GM12878 (cell line): ENCODE measurements at regions of chr2 and their contacts with region 1.

Region 1: DNA sequence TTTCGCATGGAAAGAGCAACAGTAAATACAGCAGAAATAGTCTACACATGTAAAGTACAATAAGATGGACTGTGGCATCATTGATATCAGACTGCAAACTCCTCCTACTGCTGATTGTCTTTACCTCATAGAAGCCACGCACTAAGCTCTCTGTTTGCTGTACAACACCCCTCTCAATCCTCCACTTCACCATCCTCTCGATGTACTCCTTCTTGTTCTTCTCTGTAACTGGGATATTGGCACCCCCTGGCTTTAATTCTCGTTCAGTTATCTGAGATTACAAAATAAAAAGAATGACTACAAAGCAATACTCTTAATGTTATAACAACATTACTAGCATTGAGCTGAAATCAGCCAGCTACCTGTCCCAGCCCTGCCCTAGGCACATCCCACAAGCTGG is 49.3 kb upstream of the STK17B start:
- DNase-seq: no peak
- ATAC-seq: no peak
- H3K4me3 ChIP-seq: no peak overlapping the region
- H3K27ac ChIP-seq: no peak overlapping the region
- H3K4me1 ChIP-seq: no peaks in the 10 kb centered on the region
- H3K27me3 ChIP-seq: no peaks in the 10 kb centered on the region
- CTCF ChIP-seq: no peak; a peak in 1 of 6 replicates
- EP300 ChIP-seq: no peak
- POLR2A ChIP-seq: no peak
- RAD21 ChIP-seq: no peak

Region 2: DNA sequence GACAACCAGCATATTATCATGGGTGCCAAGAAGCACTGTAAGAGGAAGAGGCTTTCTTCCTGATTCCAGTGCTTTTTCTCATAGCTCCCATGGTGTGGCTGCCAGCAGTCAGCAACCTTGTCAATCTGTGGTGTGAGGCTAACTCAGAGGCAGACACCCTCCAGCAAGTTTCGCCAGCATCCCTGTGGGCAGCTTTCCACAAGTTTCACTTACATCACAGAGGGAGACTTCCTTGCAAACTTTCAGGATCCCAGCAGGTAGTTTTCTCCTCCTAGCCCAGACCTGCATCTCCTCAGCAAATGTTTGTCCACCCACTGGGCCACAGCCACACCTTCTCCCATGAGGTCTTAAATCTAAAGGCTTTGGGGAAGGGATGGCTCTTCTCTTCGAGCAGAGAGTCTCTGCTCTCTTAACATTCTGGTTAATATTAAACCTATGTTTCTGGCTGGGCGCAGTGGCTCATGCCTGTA is 161.1 kb before region 1 on chr2:
- CTCF ChIA-PET with region 1: no interaction called
- POLR2A ChIA-PET with region 1: no interaction called
- RAD21 ChIA-PET with region 1: no interaction called
- SMC1A ChIA-PET with region 1: no interaction called
- in situ Hi-C with region 1: no loop called
- intact Hi-C with region 1: no loop called
- DNase-seq: no peak
- ATAC-seq: no peak
- H3K4me3 ChIP-seq: no peak overlapping the region
- H3K27ac ChIP-seq: no peak overlapping the region
- H3K4me1 ChIP-seq: no peaks in the 10 kb centered on the region
- H3K27me3 ChIP-seq: no peaks in the 10 kb centered on the region
- CTCF ChIP-seq: no peak
- EP300 ChIP-seq: no peak
- POLR2A ChIP-seq: no peak
- RAD21 ChIP-seq: no peak

Region 3: DNA sequence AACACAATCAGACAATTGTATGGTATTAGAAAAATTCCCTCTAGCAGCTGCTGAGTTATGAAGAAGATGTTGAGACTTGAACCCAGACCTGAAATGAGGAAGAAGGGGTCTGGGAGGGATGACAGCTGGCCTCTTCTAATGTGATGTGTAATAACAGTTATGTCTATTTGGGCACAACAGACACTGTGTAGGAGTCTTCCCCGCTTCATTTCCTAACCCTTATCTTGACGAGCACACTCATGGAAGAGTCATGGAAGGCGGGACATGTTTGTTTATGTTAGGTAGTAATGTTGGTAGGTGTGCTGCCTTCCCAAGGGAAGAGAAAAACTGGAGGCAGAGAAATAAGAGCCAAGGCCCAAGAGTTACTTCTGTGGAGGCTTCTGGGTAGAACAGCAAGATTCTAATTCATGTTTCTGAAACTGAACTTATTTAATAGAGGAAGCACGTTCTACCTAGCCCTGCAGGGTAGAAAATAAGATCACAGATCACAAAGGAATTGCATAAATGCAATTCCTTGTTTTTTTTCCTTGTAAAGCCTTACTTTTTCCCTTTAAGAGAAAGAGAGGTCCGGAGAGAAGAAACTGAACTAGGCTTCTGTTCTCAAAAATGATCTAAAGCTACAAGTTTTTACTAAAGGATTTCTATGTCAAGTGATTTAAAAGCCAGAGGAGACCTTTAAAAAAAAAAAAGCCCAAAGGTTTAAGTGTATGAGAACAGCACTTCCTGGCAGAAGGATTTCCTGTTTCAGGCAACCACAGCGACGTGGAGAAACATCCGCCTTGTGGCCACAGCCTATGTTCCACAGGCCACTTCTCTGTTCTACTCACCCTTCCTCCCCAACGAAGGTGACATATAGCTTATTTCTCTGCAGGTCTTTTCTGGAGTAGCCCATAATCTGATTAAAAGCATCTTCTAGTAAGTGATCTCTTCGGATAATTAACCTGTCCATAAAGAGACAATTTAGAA is 19.2 kb after region 1 on chr2:
- CTCF ChIA-PET with region 1: no interaction called
- POLR2A ChIA-PET with region 1: interaction called, 4 read pairs
- RAD21 ChIA-PET with region 1: interaction called, 6 read pairs
- SMC1A ChIA-PET with region 1: interaction called, 95 read pairs
- in situ Hi-C with region 1: no loop called
- intact Hi-C with region 1: no loop called
- DNase-seq: peak; percentile 86
- ATAC-seq: peak; percentile 79
- H3K4me3 ChIP-seq: no peak overlapping the region
- H3K27ac ChIP-seq: peak overlapping the region; percentile 75
- H3K4me1 ChIP-seq: peaks cover 36% of the 10 kb centered on the region
- H3K27me3 ChIP-seq: no peaks in the 10 kb centered on the region
- CTCF ChIP-seq: 0 out of 6 replicates have a peak, but pooled peaks of 1 of the 3 experiments have one; percentile 3
- EP300 ChIP-seq: peak; percentile 74 to 85
- POLR2A ChIP-seq: no peak
- RAD21 ChIP-seq: 0 out of 2 replicates have a peak, but pooled peaks have one; percentile 19

Region 4: DNA sequence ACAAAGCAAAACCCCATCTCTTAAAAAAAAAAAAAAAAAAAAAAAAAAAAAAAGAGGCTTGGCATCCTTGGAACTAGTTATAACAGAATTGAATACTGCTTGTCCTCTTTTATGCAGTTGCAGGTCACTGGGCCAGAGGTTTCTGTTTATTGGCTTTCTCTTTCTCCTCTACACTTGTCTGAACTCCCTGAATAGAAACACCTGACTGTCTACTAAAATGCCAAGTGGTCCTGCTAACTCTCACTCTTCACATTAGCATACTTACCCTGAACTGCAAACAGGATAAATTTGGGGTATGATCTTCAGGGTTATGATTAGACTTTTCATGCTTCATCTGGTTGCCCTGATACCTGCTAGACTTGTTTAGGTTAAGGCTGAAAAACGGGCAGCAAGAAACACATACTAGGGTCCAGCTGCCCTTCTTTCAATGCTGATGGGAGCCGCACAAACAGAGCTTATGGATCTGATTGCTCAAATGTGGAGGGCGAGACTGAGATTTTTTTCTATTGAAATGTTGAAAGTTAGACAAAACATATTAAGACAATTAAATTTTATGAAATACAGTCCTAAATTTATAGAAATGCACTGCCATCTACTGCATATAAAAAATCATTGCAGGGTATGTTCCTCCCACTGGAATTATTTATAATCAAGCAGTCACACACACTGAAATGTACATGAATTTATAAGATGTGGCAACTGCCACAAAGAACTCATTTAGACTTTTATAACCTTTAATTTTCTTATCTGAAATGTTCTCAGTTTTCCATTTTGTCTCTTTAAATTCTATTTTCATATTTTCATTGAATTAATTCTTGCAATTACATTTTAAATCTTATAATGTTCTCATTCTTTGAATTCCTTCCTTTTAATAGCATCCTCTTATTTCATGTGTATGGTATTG is 538.1 kb after region 1 on chr2:
- CTCF ChIA-PET with region 1: no interaction called
- POLR2A ChIA-PET with region 1: no interaction called
- RAD21 ChIA-PET with region 1: no interaction called
- SMC1A ChIA-PET with region 1: no interaction called
- in situ Hi-C with region 1: no loop called
- intact Hi-C with region 1: no loop called
- DNase-seq: no peak
- ATAC-seq: no peak
- H3K4me3 ChIP-seq: no peak overlapping the region
- H3K27ac ChIP-seq: no peak overlapping the region
- H3K4me1 ChIP-seq: no peaks in the 10 kb centered on the region
- H3K27me3 ChIP-seq: no peaks in the 10 kb centered on the region
- CTCF ChIP-seq: peak in 1 of 3 experiments; percentile 30; a peak in 2 of 6 replicates
- EP300 ChIP-seq: no peak
- POLR2A ChIP-seq: no peak
- RAD21 ChIP-seq: peak; percentile 25; the same call in 1 of the 2 replicates